Activated T-helper 1 cell treated with anti-CD3 and anti-CD28 coated beads, Interleukin-12 subunit alpha, Interleukin-12 subunit beta, Interleukin-2, Interleukin-4 antibody, amounts not matched to agents 30 ng/mL and 10 ng/mL and 1 ng/mL, durations not matched to agents 14 hours and 24 hours and 36 hours (primary cell): ENCODE measurements at regions of chr18 and their contacts with region 1.

Region 1: GRCh38 chr18:26548429-26549262 is at the start of gene KCTD1:
- DNase-seq: peak; percentile 67
- H3K4me3 Mint-ChIP-seq: peak within 1 kb of the TSS; percentile 90
- H3K27ac Mint-ChIP-seq: peak within 1 kb of the TSS; percentile 80
- H3K4me1 Mint-ChIP-seq: peaks cover 14% of the 10 kb centered on the region
- H3K27me3 Mint-ChIP-seq: peaks cover 42% of the 10 kb centered on the region
- total RNA-seq, gene KCTD1: 5.3 and 5.5 TPM in 2 replicates

Region 2: DNA sequence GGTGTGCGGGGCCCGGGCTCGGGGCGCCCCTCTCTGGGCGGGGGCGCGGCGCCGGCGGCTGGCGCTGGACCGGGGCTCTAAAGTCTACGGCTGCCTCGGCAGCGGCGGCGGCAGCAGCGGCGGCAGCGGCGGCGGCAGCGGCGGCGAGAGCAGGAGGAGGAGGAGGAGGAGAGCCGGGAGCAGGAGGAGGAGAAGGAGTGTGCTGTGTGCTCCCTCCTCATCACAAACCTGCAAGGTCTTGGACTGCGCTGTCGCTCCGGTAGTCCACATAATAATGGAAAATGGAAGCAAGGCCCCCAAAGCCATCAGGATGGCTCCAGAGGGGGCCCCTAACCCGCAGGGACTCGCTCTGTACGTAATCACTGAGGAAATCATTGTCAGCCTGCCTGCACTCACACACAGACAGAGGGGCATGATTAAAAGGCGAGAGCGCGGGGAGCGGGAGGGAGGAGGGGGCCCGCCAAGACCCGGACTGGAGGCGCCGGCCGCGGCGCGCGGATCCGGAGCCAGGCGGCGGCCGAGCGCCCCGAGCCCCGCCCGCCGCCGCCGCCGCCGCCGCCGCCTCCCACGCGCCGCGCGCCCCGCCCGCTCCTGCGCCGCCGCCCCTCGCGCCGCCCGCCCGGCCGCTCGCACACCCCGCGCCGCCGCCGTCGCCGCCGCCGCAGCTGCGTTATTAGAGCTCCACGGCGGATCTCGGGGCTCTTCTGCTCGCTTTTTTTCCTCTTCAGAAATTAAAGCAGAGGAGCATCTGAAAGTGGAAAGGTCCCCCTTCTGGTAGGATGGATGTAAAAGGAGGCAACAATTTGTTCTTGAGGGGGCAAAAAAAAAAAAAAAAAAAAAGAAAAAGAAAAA is 1196.6 kb before region 1 on chr18 and contains the start of gene ZNF521:
- intact Hi-C with region 1: loop called (anchors 5 kb)
- DNase-seq: peak; percentile 11
- H3K4me3 Mint-ChIP-seq: peak within 1 kb of the TSS; percentile 77
- H3K27ac Mint-ChIP-seq: no peak within 1 kb of the TSS
- H3K4me1 Mint-ChIP-seq: peaks cover 5% of the 10 kb centered on the region
- H3K27me3 Mint-ChIP-seq: peaks cover 65% of the 10 kb centered on the region
- total RNA-seq, gene ZNF521: not detected in 2 replicates

Region 3: DNA sequence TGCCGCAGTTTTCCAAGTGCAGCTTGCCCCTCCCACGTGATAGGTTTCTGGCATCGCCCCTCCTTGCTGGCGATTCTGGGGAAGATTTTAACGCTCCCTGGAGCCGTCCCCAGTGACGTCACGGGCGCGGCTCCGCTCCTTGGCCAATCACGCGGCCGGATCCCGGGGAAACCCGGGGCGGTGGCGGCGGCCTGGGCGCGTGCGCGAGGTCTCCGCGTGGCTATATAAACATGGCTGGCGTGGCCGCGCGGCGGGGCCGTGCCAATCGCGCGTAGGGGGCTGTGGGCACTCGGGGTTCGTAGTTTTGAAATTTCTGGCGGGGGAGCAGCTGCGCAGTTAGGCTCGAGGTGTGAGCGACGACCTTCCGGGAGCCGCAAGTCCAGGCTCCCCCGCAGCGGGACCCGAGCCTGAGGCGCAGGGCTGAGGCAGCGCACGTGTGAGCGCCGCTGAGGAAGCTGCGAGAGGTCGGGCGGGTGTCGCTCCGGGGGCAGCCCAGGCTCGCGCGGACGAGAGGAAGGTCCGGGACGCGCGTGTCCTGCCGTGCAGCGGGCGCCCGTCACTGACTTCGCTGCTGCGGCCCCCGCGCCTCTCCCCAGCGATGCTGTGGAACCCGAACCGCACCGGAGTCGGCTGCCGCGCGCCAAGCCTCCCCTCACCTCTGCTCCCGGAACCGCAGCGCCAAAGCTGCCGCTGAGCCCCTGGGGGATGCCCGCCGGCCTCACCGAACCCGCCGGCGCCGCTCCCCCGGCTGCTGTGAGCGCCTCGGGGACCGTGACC is 322.2 kb before region 1 on chr18 and contains the start of gene TAF4B:
- intact Hi-C with region 1: loop called (anchors 5 kb)
- DNase-seq: peak; percentile 93
- H3K4me3 Mint-ChIP-seq: peak within 1 kb of the TSS; percentile 94
- H3K27ac Mint-ChIP-seq: peak within 1 kb of the TSS; percentile 93
- H3K4me1 Mint-ChIP-seq: peaks cover 42% of the 10 kb centered on the region
- H3K27me3 Mint-ChIP-seq: peaks cover 3% of the 10 kb centered on the region
- total RNA-seq, gene TAF4B: 16.1 and 17.0 TPM in 2 replicates

Region 4: DNA sequence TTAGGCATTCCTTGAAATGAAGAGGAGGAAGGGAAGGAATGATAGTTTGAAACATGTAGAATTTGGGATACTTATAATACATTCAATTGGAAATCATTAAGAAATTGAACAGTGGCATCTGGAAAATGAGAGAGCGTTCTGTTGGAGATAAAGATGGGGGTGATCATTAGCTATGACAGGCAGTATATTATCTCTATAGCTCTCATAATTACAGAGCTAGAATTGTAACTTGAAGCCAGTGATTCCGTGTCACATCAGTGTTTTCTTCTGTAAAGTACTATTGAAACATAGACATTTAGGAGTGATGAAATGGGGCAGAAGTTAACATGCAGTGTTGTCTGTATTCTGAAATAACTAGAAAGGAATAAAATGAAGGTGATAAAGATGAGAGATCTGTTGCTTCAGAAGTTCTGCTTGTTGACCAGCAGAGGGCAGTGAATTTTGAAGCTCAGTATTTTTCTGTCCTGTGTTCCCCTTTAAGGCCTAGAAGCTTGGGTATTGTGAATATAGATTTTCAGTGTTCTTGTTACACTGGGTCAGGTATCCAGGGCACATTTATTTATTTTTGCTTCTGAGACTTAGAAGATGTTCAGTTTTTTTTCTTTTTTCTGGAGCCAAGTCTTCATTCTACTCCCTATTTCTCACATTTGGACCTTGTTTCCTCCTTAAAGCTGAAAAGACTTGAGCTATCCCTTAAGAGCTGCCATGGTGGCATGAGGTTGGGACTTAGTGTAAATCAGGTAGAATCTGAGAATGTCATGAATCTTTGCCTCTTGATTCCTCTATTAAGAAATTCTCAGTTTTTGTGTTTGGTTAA is 165.0 kb before region 1 on chr18:
- intact Hi-C with region 1: loop called (anchors 1 kb)
- DNase-seq: no peak
- H3K4me3 Mint-ChIP-seq: no peak overlapping the region
- H3K27ac Mint-ChIP-seq: no peak overlapping the region
- H3K4me1 Mint-ChIP-seq: no peaks in the 10 kb centered on the region
- H3K27me3 Mint-ChIP-seq: no peaks in the 10 kb centered on the region

Region 5: GRCh38 chr18:26655525-26656430 is 107.1 kb after region 1 on chr18:
- intact Hi-C with region 1: loop called (anchors 2 kb)
- DNase-seq: no peak
- H3K4me3 Mint-ChIP-seq: peak overlapping the region; percentile 41
- H3K27ac Mint-ChIP-seq: no peak overlapping the region
- H3K4me1 Mint-ChIP-seq: peaks cover 18% of the 10 kb centered on the region
- H3K27me3 Mint-ChIP-seq: peaks cover 77% of the 10 kb centered on the region

Region 6: GRCh38 chr18:26710470-26711096 is 161.9 kb after region 1 on chr18:
- intact Hi-C with region 1: loop called (anchors 5 kb)
- DNase-seq: peak; percentile 14
- H3K4me3 Mint-ChIP-seq: no peak overlapping the region
- H3K27ac Mint-ChIP-seq: no peak overlapping the region
- H3K4me1 Mint-ChIP-seq: peaks cover 25% of the 10 kb centered on the region
- H3K27me3 Mint-ChIP-seq: peaks cover 13% of the 10 kb centered on the region

Region 7: GRCh38 chr18:28176933-28177827 is 1628.5 kb after region 1 on chr18 and contains the start of gene CDH2:
- intact Hi-C with region 1: loop called (anchors 10 kb)
- DNase-seq: no peak
- H3K4me3 Mint-ChIP-seq: peak within 1 kb of the TSS; percentile 78
- H3K27ac Mint-ChIP-seq: peak within 1 kb of the TSS; percentile 83
- H3K4me1 Mint-ChIP-seq: peaks cover 4% of the 10 kb centered on the region
- H3K27me3 Mint-ChIP-seq: peaks cover 37% of the 10 kb centered on the region
- total RNA-seq, gene CDH2: 0.10 and 0.16 TPM in 2 replicates